Activated T-helper 2 cell treated with anti-CD3 and anti-CD28 coated beads, Interferon-gamma antibody, Interleukin-2, Interleukin-4, amounts not matched to agents 10 μg/mL and 5 μg/mL and 100 μg/mL, durations not matched to agents 14 hours and 24 hours and 36 hours (primary cell): ENCODE measurements at regions of chr19 and their contacts with region 1.

Region 1: DNA sequence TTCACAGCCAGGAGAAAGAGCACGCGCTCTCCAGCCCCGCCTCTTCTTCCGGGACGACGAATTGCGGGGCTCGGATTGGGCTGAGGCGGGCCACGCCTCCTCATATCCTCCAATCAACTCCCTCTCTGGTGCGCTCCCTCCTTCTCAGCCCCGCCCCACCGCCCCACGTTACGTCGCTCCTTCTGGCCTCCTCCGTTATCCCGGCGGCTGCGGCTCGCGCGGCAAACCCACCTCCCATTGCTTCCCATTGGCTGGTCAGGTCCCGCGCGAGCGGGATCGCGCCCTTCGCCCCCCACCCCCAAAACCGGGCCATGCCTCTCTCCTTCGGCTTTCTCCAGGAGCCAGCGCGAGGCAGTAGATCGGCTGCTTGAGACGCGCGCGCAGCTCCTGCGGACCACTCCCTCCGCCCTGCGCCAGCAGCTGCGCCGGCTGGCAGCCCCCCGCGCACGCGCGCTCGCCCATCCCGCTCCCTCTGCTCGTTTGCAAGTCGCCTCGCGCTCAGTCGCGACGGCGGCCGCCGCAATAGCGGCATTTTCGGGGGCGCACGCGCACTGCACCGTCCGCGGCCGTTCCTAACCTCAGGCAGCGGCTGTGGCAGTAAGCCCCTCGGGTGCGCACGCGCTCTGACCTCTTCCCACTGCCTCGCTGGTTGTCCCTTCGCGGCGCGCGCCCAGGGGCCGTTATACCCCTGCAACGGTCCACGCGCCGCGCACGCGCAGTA is 512 bp upstream of the ARHGAP35 start:
- DNase-seq: peak; percentile 98
- H3K4me3 Mint-ChIP-seq: peak overlapping the region; percentile 80
- H3K27ac Mint-ChIP-seq: peak overlapping the region; percentile 85
- H3K4me1 Mint-ChIP-seq: peaks cover 23% of the 10 kb centered on the region
- H3K27me3 Mint-ChIP-seq: no peaks in the 10 kb centered on the region

Region 2: GRCh38 chr19:46600384-46601317 is 259.6 kb before region 1 on chr19:
- intact Hi-C with region 1: loop called (anchors 2 kb)
- DNase-seq: peak; percentile 96
- H3K4me3 Mint-ChIP-seq: peak overlapping the region; percentile 93
- H3K27ac Mint-ChIP-seq: peak overlapping the region; percentile 100
- H3K4me1 Mint-ChIP-seq: peaks cover 18% of the 10 kb centered on the region
- H3K27me3 Mint-ChIP-seq: peaks cover 5% of the 10 kb centered on the region

Region 3: DNA sequence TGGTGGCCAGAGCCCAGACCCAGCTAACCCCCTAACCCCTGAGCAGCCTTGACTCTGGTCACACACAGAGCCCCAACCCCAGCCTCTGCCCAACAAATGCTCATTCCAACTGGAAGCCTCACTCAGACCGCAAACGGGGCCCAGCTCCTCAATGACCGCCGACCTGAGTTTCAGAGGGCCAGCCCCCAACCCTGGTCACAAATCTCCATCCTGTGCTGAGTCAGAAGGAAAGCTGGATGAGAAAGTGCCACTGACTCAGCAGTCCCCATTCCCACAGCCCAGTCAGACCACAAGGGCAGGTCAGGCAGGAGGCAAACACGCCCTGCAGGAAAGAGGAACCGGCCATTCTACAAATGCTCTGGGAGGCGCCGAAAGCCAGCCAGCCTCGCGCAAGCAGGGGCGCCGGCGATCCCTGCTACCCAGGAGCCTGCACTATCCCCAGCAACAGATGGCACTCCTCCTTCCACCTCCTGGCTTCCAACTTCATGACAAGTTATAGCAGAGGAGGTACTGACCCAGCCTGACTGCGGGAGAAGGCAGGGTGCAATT is 129.3 kb before region 1 on chr19:
- intact Hi-C with region 1: no loop called
- DNase-seq: no peak
- H3K4me3 Mint-ChIP-seq: no peak overlapping the region
- H3K27ac Mint-ChIP-seq: peak overlapping the region; percentile 34
- H3K4me1 Mint-ChIP-seq: peaks cover 22% of the 10 kb centered on the region
- H3K27me3 Mint-ChIP-seq: no peaks in the 10 kb centered on the region

Region 4: DNA sequence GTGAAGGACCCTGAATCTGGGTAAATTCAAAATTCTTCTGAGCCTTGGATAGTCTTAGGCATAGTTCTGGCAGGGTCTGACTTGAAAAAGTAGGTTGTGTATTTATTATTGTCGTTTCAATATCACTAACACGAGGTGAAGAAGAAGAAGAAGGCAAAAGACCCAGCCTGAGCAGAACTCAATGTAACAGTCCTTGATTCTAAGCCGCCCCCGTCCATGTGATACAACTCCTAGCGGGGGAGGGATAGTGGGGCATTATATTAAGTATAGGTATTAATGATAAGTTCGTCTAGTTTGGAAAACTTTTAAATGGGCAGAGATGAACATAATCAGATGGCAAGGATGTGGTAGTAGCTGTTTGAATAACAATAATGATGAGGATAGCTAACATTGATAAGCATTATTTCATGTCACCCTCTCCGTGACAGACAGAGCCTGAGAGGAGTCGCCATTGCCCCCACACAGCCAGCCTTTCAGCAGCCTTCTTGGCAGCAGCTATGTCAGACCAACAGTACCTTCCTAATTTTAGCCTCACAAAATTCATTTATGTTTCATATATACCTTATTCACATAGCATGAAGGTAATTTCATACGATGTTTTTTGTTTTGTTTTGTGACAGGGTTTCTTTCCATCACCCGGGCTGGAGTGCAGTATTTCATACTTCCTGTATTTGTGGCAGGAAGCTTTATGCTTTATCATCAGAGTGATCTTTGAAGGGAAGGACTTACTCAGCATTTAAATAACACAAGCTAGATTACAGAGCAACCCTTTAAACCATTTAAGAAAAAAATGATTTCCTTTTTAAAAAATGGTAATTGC is 94.9 kb after region 1 on chr19:
- intact Hi-C with region 1: loop called (anchors 5 kb)
- DNase-seq: peak; percentile 46
- H3K4me3 Mint-ChIP-seq: peak overlapping the region; percentile 75
- H3K27ac Mint-ChIP-seq: peak overlapping the region; percentile 92
- H3K4me1 Mint-ChIP-seq: peaks cover 68% of the 10 kb centered on the region
- H3K27me3 Mint-ChIP-seq: no peaks in the 10 kb centered on the region

Region 5: GRCh38 chr19:47047763-47048405 is 187.6 kb after region 1 on chr19:
- intact Hi-C with region 1: loop called (anchors 1 kb)
- DNase-seq: peak; percentile 77
- H3K4me3 Mint-ChIP-seq: peak overlapping the region; percentile 87
- H3K27ac Mint-ChIP-seq: peak overlapping the region; percentile 82
- H3K4me1 Mint-ChIP-seq: peaks cover 7% of the 10 kb centered on the region
- H3K27me3 Mint-ChIP-seq: peaks cover 3% of the 10 kb centered on the region

Region 6: GRCh38 chr19:47256688-47257443 is 396.6 kb after region 1 on chr19:
- intact Hi-C with region 1: loop called (anchors 10 kb)
- DNase-seq: peak; percentile 99
- H3K4me3 Mint-ChIP-seq: peak overlapping the region; percentile 86
- H3K27ac Mint-ChIP-seq: peak overlapping the region; percentile 87
- H3K4me1 Mint-ChIP-seq: peaks cover 22% of the 10 kb centered on the region
- H3K27me3 Mint-ChIP-seq: no peaks in the 10 kb centered on the region